ENCODE measurements at regions of chr19 and their contacts with region 1.

Region 1: DNA sequence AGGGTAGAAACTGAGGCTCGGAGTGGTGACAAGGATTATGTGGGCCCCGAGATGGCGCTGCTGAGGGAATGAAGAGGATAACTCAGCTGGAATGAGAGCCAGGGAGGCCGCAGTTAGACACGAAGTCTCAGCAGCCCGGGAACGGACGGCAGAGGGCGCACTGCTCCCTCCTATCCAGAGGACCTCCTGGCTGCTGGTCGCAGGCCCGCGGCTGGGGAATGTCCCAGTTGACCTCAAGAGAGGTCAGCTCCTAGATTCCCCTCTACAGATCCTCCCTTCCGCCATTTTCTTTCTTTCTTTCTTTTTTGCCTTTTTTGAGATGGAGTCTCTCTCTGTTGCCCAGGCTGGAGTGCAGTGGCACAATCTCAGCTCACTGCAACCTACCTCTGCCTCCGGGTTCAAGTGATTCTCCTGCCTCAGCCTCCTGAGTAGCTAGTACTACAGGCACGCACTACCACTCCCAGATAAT is 24.1 kb upstream of the ASPDH start:
- DNase-seq: peak; percentile 73
- H3K4me3 Mint-ChIP-seq: no peak overlapping the region
- H3K27ac Mint-ChIP-seq: no peak overlapping the region
- H3K4me1 Mint-ChIP-seq: no peaks in the 10 kb centered on the region
- H3K27me3 Mint-ChIP-seq: no peaks in the 10 kb centered on the region
- CTCF ChIP-seq: peak; percentile 72

Region 2: GRCh38 chr19:50556282-50557008 is 18.6 kb after region 1 on chr19:
- CTCF ChIA-PET with region 1: interaction called, 19 read pairs
- POLR2A ChIA-PET with region 1: no interaction called
- intact Hi-C with region 1: no loop called
- DNase-seq: peak; percentile 52
- H3K4me3 Mint-ChIP-seq: peak overlapping the region; percentile 75
- H3K27ac Mint-ChIP-seq: peak overlapping the region; percentile 9
- H3K4me1 Mint-ChIP-seq: peaks cover 6% of the 10 kb centered on the region
- H3K27me3 Mint-ChIP-seq: peaks cover 55% of the 10 kb centered on the region
- CTCF ChIP-seq: no peak

Region 3: GRCh38 chr19:50785329-50785728 is 247.5 kb after region 1 on chr19:
- CTCF ChIA-PET with region 1: interaction called, 21 read pairs
- POLR2A ChIA-PET with region 1: interaction called, 3 read pairs
- intact Hi-C with region 1: loop called (anchors 1 kb)
- DNase-seq: no peak
- H3K4me3 Mint-ChIP-seq: no peak overlapping the region
- H3K27ac Mint-ChIP-seq: no peak overlapping the region
- H3K4me1 Mint-ChIP-seq: no peaks in the 10 kb centered on the region
- H3K27me3 Mint-ChIP-seq: peaks cover 13% of the 10 kb centered on the region
- CTCF ChIP-seq: no peak